ENCODE measurements at regions of chr10 and their contacts with region 1.

Region 1: DNA sequence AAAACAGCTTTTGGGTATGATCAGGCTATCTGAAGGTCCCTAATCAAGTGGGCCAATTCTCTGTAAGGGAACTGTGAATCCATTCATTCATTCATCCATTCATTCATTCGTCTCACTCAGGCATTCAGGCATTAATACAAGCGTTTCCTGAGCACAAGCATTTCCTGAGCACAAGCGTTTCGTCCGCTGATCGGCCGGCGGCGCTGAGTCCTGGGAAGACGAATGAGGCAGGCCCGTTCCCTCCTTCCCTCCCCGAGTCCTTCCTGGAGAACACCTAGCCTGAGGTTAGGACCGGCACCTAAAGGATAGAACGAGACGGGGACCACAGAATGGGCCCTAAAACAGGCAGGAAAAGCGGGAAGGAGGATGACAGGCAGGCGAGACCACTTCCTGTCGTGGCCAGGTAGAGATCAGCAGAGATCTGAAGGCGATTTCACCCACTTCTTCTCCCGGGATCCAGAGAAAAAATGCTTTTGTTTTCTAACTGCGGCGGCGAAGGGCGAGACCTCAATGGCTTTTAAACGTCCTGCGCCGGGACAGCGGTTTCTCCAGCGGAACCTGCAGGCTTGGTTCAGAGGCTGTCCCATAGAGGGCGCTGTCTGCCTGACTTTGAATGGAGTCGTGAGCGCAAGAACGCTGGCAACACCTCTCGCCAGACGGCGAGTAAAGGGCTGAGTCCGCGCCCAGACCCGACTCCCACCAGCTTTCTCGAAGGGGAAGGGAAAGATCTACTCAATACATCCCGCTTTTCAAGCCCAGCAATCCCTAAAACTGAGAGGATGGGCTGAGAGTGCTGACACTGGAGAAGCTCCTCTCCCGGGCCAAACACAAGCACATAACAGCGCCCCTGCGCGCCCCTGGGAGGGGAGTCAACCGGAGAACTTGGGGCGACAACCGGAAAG is 2.9 kb upstream of the HMX3 start:
- DNase-seq: peak; percentile 72
- ATAC-seq: peak; percentile 81
- H3K4me3 ChIP-seq: peak overlapping the region; percentile 6 to 66 (median 27); a peak in 5 of 6 replicates
- H3K27ac ChIP-seq: no peak overlapping the region
- H3K4me1 ChIP-seq: peaks cover 37% of the 10 kb centered on the region
- H3K27me3 ChIP-seq: peaks cover 14 to 79% of the 10 kb centered on the region in 2 experiments; a peak in 4 of 5 replicates
- CTCF ChIP-seq: peak; percentile 94
- EP300 ChIP-seq: no peak
- POLR2A ChIP-seq: no peak
- RAD21 ChIP-seq: peak; percentile 89

Region 2: DNA sequence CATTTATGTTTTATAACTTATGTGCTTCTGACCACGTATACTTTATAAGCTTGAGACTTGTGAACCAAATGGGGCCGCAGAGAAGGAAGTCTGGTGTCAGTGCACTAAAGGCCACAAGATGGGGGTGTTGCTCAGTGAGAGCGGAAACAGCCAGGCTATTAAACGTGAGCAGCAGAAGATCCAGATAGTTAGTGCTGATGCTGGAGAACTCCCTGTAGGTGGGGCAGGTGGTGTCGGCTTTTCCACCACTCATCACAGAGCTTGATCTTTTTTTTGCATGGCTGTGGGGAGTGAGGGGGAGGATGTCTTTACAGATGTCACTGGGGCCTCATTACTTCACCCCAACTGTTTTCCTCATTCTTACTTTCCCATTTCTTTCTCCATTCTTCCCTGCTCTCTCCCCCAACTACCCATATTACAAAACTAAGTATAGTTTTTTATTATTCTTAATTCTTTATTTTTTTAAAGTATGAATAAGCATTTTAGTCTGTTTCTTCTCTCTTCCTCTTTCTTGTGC is 89.4 kb before region 1 on chr10:
- CTCF ChIA-PET with region 1: interaction called, 4 read pairs
- POLR2A ChIA-PET with region 1: no interaction called
- in situ Hi-C with region 1: no loop called
- intact Hi-C with region 1: loop called (anchors 2 kb)
- DNase-seq: peak; percentile 71
- ATAC-seq: peak; percentile 94
- H3K4me3 ChIP-seq: no peak overlapping the region
- H3K27ac ChIP-seq: no peak overlapping the region
- H3K4me1 ChIP-seq: peaks cover 18% of the 10 kb centered on the region
- H3K27me3 ChIP-seq: no peaks in the 10 kb centered on the region
- CTCF ChIP-seq: peak; percentile 85
- EP300 ChIP-seq: no peak
- POLR2A ChIP-seq: no peak
- RAD21 ChIP-seq: peak; percentile 76

Region 3: DNA sequence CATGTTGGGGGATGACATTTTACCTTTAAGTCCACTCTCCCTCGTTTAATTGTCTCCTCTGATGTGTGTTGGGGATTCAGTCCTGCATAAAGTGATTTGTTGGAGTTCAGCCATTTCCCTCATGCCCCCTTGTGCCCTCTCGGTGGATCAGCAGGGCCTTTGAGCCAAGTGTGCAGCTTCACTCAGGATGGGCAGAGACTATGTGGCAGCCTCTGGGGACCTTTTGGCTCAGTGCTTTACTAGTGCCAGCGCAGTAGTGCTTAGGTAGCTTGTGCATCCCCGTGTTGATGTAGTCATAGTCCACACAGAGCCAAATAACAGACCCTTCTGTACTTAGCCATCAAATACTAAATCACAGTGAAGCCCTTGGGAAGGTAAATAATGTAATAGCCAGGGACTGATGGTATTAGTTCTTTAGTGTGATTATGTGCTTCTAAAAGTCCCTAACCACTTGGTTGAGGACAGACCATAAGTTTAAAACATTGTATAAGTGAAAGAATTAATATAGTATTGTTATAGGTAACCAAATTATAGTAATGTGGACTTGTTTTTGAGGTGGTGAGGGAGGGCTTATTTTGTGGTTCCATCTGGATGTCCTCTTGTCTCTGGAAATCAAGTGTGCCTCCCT is 32.7 kb after region 1 on chr10:
- CTCF ChIA-PET with region 1: interaction called, 4 read pairs
- POLR2A ChIA-PET with region 1: no interaction called
- in situ Hi-C with region 1: no loop called
- intact Hi-C with region 1: loop called (anchors 1 kb)
- DNase-seq: no peak
- ATAC-seq: peak; percentile 72
- H3K4me3 ChIP-seq: no peak overlapping the region
- H3K27ac ChIP-seq: no peak overlapping the region
- H3K4me1 ChIP-seq: peaks cover 9% of the 10 kb centered on the region
- H3K27me3 ChIP-seq: no peaks in the 10 kb centered on the region
- CTCF ChIP-seq: peak; percentile 32
- EP300 ChIP-seq: no peak
- POLR2A ChIP-seq: no peak
- RAD21 ChIP-seq: no peak

Region 4: DNA sequence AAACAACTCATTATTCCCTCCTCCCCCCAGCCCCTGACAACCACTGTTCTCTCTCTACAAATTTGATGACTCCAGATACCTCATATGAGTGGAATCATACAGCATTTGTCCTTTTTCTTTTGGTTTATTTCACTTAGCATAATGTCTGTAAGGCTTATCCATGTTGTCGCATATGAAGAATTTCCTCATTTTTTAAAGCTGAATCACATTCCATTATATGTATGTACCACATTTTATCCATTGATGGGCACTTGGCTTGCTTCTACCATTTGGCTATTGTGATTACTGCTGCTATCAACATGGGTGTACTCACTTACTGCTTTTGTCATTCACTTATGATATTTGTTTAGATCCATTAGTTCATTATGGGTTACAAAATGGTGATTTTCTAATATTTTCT is 134.1 kb after region 1 on chr10:
- CTCF ChIA-PET with region 1: no interaction called
- POLR2A ChIA-PET with region 1: no interaction called
- in situ Hi-C with region 1: no loop called
- intact Hi-C with region 1: loop called (anchors 5 kb)
- DNase-seq: no peak
- ATAC-seq: no peak
- H3K4me3 ChIP-seq: no peak overlapping the region
- H3K27ac ChIP-seq: no peak overlapping the region
- H3K4me1 ChIP-seq: peaks cover 7% of the 10 kb centered on the region; the same call in 1 of the 2 replicates
- H3K27me3 ChIP-seq: 0 out of 5 replicates have a peak, but pooled peaks cover 0 to 4% of the 10 kb centered on the region in 2 experiments
- CTCF ChIP-seq: no peak
- EP300 ChIP-seq: no peak
- POLR2A ChIP-seq: no peak
- RAD21 ChIP-seq: no peak

Region 5: GRCh38 chr10:123284022-123284421 is 151.2 kb after region 1 on chr10:
- CTCF ChIA-PET with region 1: interaction called, 8 read pairs
- POLR2A ChIA-PET with region 1: no interaction called
- in situ Hi-C with region 1: no loop called
- intact Hi-C with region 1: loop called (anchors 1 kb)
- DNase-seq: peak; percentile 18
- ATAC-seq: peak; percentile 85
- H3K4me3 ChIP-seq: no peak overlapping the region
- H3K27ac ChIP-seq: no peak overlapping the region
- H3K4me1 ChIP-seq: no peaks in the 10 kb centered on the region
- H3K27me3 ChIP-seq: peaks cover 0 to 9% of the 10 kb centered on the region in 2 experiments; a peak in 1 of 5 replicates
- CTCF ChIP-seq: peak; percentile 42; the same call in 1 of the 2 replicates
- EP300 ChIP-seq: no peak
- POLR2A ChIP-seq: no peak
- RAD21 ChIP-seq: no peak

Region 6: DNA sequence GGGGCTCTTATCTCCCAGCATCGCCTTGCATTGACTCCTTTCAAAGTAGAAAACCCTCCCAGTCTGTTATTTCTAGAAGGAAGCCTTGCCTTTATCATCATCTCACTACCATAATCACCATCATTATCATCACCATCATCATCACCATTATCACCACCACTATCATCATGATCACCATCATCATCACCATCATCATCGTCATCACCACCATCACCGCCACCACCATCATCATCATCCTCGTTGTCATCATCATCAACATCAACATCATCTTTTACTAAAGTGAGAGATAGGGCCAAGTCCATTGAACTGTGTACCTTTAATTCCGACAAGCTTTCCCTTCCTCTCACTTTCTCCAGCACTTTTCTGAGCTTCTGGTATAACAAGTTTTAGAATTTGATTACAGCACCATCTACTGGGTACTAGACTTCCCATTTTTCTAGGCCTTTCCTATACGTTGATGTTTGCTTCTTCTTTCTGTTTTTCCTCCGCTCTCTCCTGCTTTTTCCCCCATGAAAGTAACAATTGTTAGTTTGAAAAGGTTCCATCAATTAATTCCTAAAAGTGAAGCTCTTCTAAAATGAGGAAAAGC is 247.8 kb after region 1 on chr10:
- CTCF ChIA-PET with region 1: interaction called, 11 read pairs
- POLR2A ChIA-PET with region 1: no interaction called
- in situ Hi-C with region 1: loop called (anchors 5 kb)
- intact Hi-C with region 1: loop called (anchors 2 kb)
- DNase-seq: peak; percentile 15
- ATAC-seq: no peak
- H3K4me3 ChIP-seq: no peak overlapping the region
- H3K27ac ChIP-seq: no peak overlapping the region
- H3K4me1 ChIP-seq: peaks cover 17% of the 10 kb centered on the region
- H3K27me3 ChIP-seq: peaks cover 2 to 4% of the 10 kb centered on the region in 2 experiments; a peak in 2 of 5 replicates
- CTCF ChIP-seq: peak; percentile 46
- EP300 ChIP-seq: no peak
- POLR2A ChIP-seq: no peak
- RAD21 ChIP-seq: no peak

Region 7: DNA sequence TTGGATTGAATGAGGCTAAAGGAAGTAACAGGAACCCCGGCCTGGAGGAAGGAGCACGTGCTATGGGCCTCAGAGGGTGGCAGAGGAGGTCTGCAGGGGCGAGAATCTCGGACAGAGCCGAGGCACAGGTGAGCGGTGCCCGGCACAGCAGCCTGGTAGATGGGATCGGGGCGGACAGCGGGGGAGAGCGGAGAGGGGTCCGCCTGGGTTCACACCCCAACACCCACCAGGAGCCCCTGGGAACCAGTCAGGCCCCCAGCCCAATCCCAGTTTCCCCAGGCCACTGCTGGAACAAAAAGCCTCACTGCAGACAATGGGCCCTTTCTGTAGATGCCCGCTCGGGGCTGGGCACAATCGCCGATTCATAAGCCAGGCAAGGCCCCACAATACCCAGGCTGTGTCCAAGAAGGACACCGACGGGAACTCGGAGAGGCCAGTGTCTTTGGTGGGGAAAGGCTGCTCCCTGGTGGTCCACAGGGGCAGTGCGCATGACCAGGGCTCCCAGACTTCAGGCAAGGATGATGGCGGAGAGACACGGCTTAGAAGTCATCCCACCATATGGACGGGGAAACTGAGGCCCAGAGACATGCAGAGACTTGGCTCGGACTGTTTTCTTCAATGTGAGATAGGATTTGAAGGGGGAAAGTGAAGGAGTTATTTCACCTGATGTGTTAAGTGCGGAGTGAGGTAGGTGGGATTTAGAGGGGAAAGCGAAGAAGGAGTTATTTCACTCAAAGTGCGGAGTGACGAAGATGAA is 426.4 kb after region 1 on chr10:
- CTCF ChIA-PET with region 1: interaction called, 22 read pairs
- POLR2A ChIA-PET with region 1: no interaction called
- in situ Hi-C with region 1: loop called (anchors 5 kb)
- intact Hi-C with region 1: loop called (anchors 1 kb)
- DNase-seq: peak; percentile 36
- ATAC-seq: peak; percentile 94
- H3K4me3 ChIP-seq: no peak overlapping the region
- H3K27ac ChIP-seq: no peak overlapping the region
- H3K4me1 ChIP-seq: no peaks in the 10 kb centered on the region
- H3K27me3 ChIP-seq: peaks cover 0 to 11% of the 10 kb centered on the region in 2 experiments; a peak in 1 of 5 replicates
- CTCF ChIP-seq: peak; percentile 97
- EP300 ChIP-seq: no peak
- POLR2A ChIP-seq: no peak
- RAD21 ChIP-seq: peak; percentile 92

Region 8: DNA sequence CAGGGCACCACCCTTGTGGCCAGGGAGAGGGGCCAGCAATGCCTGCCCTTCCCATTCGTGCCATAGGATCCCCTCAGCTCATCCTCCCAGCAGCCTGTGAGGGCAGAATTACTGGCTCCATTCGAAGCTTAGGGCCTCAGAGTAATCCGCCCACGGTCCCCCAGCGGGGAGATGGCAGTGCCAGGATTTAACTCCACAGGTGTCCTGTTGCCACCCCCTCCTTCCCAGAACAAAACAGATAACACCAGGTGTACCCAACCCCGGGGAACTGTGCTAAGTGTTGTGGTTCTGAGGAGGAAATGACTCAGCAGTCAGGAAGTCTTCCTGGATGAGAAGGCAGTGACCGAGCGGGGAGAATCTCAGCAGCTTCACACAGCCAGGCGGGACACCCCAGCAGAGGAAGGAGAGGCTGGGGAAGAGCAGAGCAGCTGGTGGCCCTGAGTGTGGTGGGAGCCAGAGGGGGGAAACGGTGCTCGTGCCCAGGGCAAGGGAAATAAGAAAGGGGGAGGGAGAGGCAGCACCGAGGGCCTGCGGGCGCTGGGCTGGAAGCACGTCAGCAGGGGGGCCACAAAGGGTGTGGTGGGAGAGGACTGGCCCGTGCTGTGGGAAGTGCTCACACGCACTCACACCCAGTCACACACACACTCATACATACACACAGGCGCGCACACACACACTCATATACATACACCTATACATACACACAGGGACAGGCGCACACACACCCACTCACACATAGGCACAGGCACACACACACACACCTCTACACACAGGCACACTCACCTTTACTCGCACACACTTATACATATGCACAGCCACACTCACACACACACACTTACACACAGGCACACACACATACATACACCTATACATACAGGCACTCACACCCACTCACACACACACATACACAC is 1020.3 kb after region 1 on chr10:
- CTCF ChIA-PET with region 1: no interaction called
- POLR2A ChIA-PET with region 1: no interaction called
- in situ Hi-C with region 1: no loop called
- intact Hi-C with region 1: no loop called
- DNase-seq: peak; percentile 54
- ATAC-seq: peak; percentile 58
- H3K4me3 ChIP-seq: no peak overlapping the region; a peak in 1 of 6 replicates
- H3K27ac ChIP-seq: no peak overlapping the region
- H3K4me1 ChIP-seq: peaks cover 43% of the 10 kb centered on the region
- H3K27me3 ChIP-seq: peaks cover 0 to 8% of the 10 kb centered on the region in 2 experiments; a peak in 4 of 5 replicates
- CTCF ChIP-seq: no peak
- EP300 ChIP-seq: no peak
- POLR2A ChIP-seq: no peak
- RAD21 ChIP-seq: no peak